Cardiac septum (tissue), 1 donor: ENCODE measurements at regions of chr12 and their contacts with region 1.

Region 1: DNA sequence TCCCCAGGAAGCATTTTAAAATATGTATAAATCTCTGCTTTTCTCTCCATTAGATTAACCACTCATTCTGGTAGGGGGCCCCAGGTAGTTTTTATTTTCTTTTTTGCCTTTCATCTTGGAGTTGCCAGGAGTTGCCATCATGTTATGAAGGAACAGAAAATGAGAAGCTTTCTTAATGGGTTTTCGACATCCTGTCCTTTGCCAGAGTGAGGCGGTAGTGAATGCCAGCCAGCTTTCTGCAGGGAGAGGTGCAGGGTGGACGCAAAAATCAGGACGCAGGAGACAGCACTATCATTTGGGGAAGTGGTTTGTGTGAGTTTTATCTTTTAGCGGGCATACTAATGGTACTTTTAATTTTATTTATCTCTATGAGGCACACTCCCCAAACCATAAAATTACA is 1.7 kb downstream of the RASSF8 start:
- DNase-seq: no peak

Region 2: GRCh38 chr12:26017484-26018206 is 57.5 kb after region 1 on chr12:
- intact Hi-C with region 1: loop called (anchors 2 kb)
- DNase-seq: no peak